ENCODE measurements at regions of chr1 and their contacts with region 1.

Region 1: GRCh38 chr1:42952303-42953001 is 6.2 kb downstream of the SLC2A1 start:
- DNase-seq: peak in 4 of 10 donors; percentile 34 to 73 (median 36)
- ATAC-seq: peak; percentile 72 to 74
- H3K4me3 Mint-ChIP-seq: peak overlapping the region; percentile 44 to 79 (median 65)
- H3K27ac Mint-ChIP-seq: peak overlapping the region; percentile 49 to 95 (median 83)
- H3K4me1 Mint-ChIP-seq: peaks cover 36 to 93% (median 92%) of the 10 kb centered on the region in 4 donors
- H3K27me3 Mint-ChIP-seq: no peaks in the 10 kb centered on the region

Region 2: GRCh38 chr1:42913426-42914091 is 38.9 kb before region 1 on chr1:
- POLR2A ChIA-PET with region 1: no interaction called
- DNase-seq: peak in 9 of 10 donors; percentile 46 to 87 (median 71)
- ATAC-seq: peak; percentile 87 to 93
- H3K4me3 Mint-ChIP-seq: no peak overlapping the region
- H3K27ac Mint-ChIP-seq: no peak overlapping the region
- H3K4me1 Mint-ChIP-seq: peaks cover 2 to 10% (median 6%) of the 10 kb centered on the region in 4 donors
- H3K27me3 Mint-ChIP-seq: peaks cover 0 to 10% (median 1%) of the 10 kb centered on the region in 5 donors

Region 3: DNA sequence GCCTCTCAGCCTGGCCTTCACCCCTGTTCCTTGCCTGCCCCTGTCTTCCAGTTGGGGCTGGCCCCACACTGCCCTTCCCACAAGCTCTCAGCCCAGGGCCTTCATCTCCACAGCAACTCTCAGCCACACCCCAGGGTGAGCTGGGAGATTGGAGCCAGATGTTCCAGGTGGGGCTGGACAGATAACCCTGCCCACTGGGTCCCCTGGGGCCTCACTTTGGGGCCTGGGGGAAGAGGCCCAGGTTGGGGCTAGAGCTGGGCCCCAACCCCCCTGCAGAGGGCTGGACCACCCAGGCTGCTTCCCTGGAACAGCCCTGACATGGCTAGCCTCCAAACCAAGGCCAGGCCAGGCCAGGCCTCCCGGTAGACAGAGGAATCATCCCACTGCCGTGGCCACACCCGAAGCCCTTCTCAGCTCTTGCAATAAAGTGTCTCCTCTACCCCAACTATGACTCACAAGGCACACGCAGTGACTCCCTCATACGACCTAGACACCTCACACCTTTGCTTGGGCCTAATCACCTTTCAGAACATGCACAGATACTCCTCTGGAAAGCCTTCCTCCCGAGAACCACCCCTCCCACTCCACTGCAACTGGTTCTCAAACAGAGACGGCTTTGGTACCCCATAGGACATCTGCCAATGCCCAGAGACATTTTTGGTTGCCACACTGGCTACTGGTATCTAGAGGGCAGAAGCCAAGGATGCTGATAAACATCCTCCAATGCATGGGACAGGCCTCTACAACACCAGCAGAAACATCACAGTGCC is 16.0 kb before region 1 on chr1:
- POLR2A ChIA-PET with region 1: interaction called, 56 read pairs
- DNase-seq: no peak
- ATAC-seq: no peak
- H3K4me3 Mint-ChIP-seq: peak overlapping the region in 7 of 10 donors; percentile 41 to 70 (median 59)
- H3K27ac Mint-ChIP-seq: peak overlapping the region; percentile 88 to 99 (median 92)
- H3K4me1 Mint-ChIP-seq: peaks cover 68 to 99% (median 98%) of the 10 kb centered on the region in 4 donors
- H3K27me3 Mint-ChIP-seq: no peaks in the 10 kb centered on the region

Measured in naive thymus-derived CD8-positive, alpha-beta T cell (primary cell).